ENCODE measurements at regions of chr14 and their contacts with region 1.

Region 1: DNA sequence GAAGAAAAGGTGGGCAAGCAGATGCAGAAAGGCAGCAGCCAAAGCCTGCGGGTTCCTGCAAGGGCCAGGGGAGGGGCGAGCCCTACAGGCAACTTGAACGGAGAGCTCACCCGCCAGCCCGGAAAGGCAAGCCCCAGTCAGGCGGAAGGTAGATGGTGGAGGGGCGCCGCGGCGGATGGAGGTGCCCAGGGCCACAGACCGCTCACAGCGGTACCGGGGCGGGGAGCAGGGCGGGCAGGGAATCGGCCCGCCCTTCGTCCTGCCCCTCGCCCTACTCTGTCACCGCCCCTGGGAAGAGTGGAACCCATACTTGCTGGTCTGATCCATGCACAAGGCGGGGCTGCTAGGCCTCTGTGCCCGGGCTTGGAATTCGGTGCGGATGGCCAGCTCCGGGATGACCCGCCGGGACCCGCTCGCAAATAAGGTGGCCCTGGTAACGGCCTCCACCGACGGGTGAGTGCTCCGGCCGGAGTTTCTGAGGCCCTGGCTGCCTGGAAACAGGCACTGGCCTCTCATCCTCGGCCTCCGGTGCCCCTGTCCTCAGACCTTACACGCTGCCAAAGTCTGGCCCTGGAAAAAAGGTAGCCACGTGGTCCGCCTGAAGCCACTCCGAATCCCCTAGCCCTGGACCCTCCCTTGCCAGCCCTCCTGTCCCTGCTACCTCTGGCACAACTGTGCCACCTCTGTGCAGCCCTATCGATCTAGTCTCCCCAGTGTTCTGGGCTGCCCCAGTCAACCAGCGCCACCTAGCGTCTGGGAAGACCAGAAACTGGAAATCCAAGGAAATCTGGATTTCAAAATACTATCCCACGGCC is at the start of gene DHRS4:
- H3K4me3 ChIP-seq: peak within 1 kb of the TSS; percentile 94
- H3K27ac ChIP-seq: peak within 1 kb of the TSS; percentile 61; the same call in 1 of the 2 replicates
- H3K4me1 ChIP-seq: no peaks in the 10 kb centered on the region
- CTCF ChIP-seq: peak; percentile 86

Region 2: GRCh38 chr14:23930742-23931141 is 22.9 kb before region 1 on chr14:
- CTCF ChIA-PET with region 1: no interaction called
- POLR2A ChIA-PET with region 1: no interaction called
- H3K4me3 ChIP-seq: no peak overlapping the region
- H3K27ac ChIP-seq: no peak overlapping the region
- H3K4me1 ChIP-seq: no peaks in the 10 kb centered on the region
- CTCF ChIP-seq: no peak

Region 3: GRCh38 chr14:23942387-23942986 is 11.2 kb before region 1 on chr14:
- CTCF ChIA-PET with region 1: interaction called, 13 read pairs
- POLR2A ChIA-PET with region 1: no interaction called
- H3K4me3 ChIP-seq: no peak overlapping the region
- H3K27ac ChIP-seq: no peak overlapping the region
- H3K4me1 ChIP-seq: no peaks in the 10 kb centered on the region
- CTCF ChIP-seq: no peak

Measured in HEK293 (cell line).